Activated T-helper 1 cell treated with anti-CD3 and anti-CD28 coated beads, Interleukin-12 subunit alpha, Interleukin-12 subunit beta, Interleukin-2, Interleukin-4 antibody, amounts not matched to agents 30 ng/mL and 10 ng/mL and 1 ng/mL, durations not matched to agents 14 hours and 24 hours and 36 hours (primary cell): ENCODE measurements at regions of chr20 and their contacts with region 1.

Region 1: GRCh38 chr20:62156592-62157386 is 13.2 kb downstream of the SS18L1 start:
- DNase-seq: peak; percentile 61
- H3K4me3 Mint-ChIP-seq: no peak overlapping the region
- H3K27ac Mint-ChIP-seq: no peak overlapping the region
- H3K4me1 Mint-ChIP-seq: peaks cover 19% of the 10 kb centered on the region
- H3K27me3 Mint-ChIP-seq: peaks cover 2% of the 10 kb centered on the region

Region 2: GRCh38 chr20:62010551-62011402 is 146.0 kb before region 1 on chr20:
- intact Hi-C with region 1: loop called (anchors 1 kb)
- DNase-seq: peak; percentile 34
- H3K4me3 Mint-ChIP-seq: no peak overlapping the region
- H3K27ac Mint-ChIP-seq: no peak overlapping the region
- H3K4me1 Mint-ChIP-seq: peaks cover 8% of the 10 kb centered on the region
- H3K27me3 Mint-ChIP-seq: no peaks in the 10 kb centered on the region

Region 3: GRCh38 chr20:62097881-62098407 is 58.8 kb before region 1 on chr20:
- intact Hi-C with region 1: no loop called
- DNase-seq: no peak
- H3K4me3 Mint-ChIP-seq: no peak overlapping the region
- H3K27ac Mint-ChIP-seq: no peak overlapping the region
- H3K4me1 Mint-ChIP-seq: no peaks in the 10 kb centered on the region
- H3K27me3 Mint-ChIP-seq: no peaks in the 10 kb centered on the region

Region 4: DNA sequence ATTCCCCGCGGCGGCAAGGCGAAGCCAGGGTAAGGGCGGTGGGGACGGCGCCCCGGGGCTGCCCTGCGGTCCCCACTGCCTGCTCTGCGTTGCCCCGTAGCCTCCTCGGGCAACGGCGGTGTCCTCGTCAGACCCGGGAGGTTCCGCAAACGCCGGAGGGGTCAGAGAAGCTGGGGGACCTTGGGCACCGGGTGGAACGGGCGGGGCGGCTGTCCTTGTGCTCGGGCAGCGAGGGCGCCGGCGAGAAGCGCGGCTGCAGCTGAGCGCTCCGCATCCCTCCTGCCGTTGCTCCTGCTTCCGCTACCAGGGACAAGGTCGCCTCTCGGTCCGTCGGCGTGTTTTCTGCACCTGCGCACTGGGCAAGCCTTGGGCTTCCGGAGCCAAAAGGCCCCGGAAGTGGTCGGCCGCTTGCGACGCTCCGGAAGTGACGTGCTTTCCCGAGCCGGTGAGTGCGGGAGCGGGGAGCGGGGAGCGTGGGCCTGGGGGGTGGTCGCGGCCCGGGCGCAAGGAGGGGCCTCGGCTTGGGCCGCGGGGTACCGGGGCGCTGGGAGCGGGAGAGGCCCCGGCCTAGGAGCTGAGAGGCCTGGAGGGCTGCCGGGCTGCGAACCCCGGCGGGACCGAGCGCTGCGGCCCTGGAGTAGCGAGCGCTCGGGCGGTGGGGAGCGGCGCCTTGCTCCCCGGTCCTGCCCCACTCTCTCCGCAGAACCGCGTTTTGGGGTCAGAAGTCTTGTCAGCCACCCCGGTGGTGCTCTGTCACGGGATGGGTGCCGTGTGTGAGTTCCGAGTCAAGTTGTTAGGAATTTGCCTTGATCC is 26.0 kb after region 1 on chr20 and contains the start of gene MTG2:
- intact Hi-C with region 1: loop called (anchors 2 kb)
- DNase-seq: peak; percentile 95
- H3K4me3 Mint-ChIP-seq: peak within 1 kb of the TSS; percentile 92
- H3K27ac Mint-ChIP-seq: peak within 1 kb of the TSS; percentile 93
- H3K4me1 Mint-ChIP-seq: peaks cover 39% of the 10 kb centered on the region
- H3K27me3 Mint-ChIP-seq: no peaks in the 10 kb centered on the region
- total RNA-seq, gene MTG2: 45.4 and 46.3 TPM in 2 replicates